Activated CD8-positive, alpha-beta T cell treated with anti-CD3 and anti-CD28 coated beads for 36 hours (primary cell): ENCODE measurements at regions of chr7 and their contacts with region 1.

Region 1: GRCh38 chr7:2709553-2710285 is 21.7 kb downstream of the AMZ1 start:
- DNase-seq: peak; percentile 88
- ATAC-seq: peak; percentile 90
- H3K4me3 Mint-ChIP-seq: peak overlapping the region; percentile 59
- H3K27ac Mint-ChIP-seq: peak overlapping the region; percentile 55
- H3K4me1 Mint-ChIP-seq: peaks cover 31% of the 10 kb centered on the region
- H3K27me3 Mint-ChIP-seq: peaks cover 14% of the 10 kb centered on the region
- CTCF ChIP-seq: peak; percentile 97

Region 2: GRCh38 chr7:2537981-2538851 is 171.5 kb before region 1 on chr7:
- CTCF ChIA-PET with region 1: no interaction called
- POLR2A ChIA-PET with region 1: no interaction called
- intact Hi-C with region 1: no loop called
- DNase-seq: no peak
- ATAC-seq: no peak
- H3K4me3 Mint-ChIP-seq: no peak overlapping the region
- H3K27ac Mint-ChIP-seq: no peak overlapping the region
- H3K4me1 Mint-ChIP-seq: no peaks in the 10 kb centered on the region
- H3K27me3 Mint-ChIP-seq: no peaks in the 10 kb centered on the region
- CTCF ChIP-seq: no peak

Region 3: GRCh38 chr7:2608921-2609411 is 100.8 kb before region 1 on chr7:
- CTCF ChIA-PET with region 1: interaction called, 10 read pairs
- POLR2A ChIA-PET with region 1: no interaction called
- intact Hi-C with region 1: no loop called
- DNase-seq: peak; percentile 56
- ATAC-seq: peak; percentile 79
- H3K4me3 Mint-ChIP-seq: no peak overlapping the region
- H3K27ac Mint-ChIP-seq: no peak overlapping the region
- H3K4me1 Mint-ChIP-seq: peaks cover 7% of the 10 kb centered on the region
- H3K27me3 Mint-ChIP-seq: no peaks in the 10 kb centered on the region
- CTCF ChIP-seq: peak; percentile 46

Region 4: DNA sequence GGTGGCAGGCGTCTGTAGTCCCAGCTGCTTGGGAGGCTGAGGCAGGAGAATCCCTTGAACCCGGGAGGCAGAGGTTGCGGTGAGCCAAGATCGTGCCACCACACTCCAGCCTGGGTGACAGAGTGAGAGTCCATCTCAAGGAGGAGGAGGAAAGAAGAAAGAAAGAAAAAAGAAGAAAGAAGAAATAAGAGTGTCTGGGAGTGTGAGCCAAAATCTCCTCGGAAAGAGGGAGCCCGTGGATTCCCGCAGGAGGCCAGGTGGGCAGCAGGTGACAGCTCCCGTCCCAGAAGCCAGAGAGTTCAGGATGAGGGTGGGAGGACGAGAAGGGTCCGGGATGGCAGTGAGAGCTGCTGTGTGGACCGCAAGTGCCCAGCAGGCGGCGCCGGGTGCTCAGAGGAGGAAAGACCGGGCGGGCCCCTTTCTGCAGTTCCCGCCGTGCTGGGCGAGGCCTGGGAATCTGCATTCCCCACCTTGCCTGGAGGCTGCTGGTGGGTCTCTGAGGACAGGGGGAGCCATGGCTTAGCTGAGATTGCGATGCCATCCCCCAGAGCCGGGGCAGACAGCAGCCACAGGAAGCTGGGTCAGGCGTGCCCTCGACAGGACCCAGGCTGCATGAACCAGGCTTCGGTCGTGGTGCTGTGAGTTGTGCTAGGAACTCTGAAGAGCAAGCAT is 38.9 kb before region 1 on chr7:
- CTCF ChIA-PET with region 1: interaction called, 249 read pairs
- POLR2A ChIA-PET with region 1: interaction called, 11 read pairs
- intact Hi-C with region 1: loop called (anchors 2 kb)
- DNase-seq: peak; percentile 82
- ATAC-seq: peak; percentile 95
- H3K4me3 Mint-ChIP-seq: no peak overlapping the region
- H3K27ac Mint-ChIP-seq: no peak overlapping the region
- H3K4me1 Mint-ChIP-seq: peaks cover 4% of the 10 kb centered on the region
- H3K27me3 Mint-ChIP-seq: peaks cover 11% of the 10 kb centered on the region
- CTCF ChIP-seq: peak; percentile 96

Region 5: DNA sequence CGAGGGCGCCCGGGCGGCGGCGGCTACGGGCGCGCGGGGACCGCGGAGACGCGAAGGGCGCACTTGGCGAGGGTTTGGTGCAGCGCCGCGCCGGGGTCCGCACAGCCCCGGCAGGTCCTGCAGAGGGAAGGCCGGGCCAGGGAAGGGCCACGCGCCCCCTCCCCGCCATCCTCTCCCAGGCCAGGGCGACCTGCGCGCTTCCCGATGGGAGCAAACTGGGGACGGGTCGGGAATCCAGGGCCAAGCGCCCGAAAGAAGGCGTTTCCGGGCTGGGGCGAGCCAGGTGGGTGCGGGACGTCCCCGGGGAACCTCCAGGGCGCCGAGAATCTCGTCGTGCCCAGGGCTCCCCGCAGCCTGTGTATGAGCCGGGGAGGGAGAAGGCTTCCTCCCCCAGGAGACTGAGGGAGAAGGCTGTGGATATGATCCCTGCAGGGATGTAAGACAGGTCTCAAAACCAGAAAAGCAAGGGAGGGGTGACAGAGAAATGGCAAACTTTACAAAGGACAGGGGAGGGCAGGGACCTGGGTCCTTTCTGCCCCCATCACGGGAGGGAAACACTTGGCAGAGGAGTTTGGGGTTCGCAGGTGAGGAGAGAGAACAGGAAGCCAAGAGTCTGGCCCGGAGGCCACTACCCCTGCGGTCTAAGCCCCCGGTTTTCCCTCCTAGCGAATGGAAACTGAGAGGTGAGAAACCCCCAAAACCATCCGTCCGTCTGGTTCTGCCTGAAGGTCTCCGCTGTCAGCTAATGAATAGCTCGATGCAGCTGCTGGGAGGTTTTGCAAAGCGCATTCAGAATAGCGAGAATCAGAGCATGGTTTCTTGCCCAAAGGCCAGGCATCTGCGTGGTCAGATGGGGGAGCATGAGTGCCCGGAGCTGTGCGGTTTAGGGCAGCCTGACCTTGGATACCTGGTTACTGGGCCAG is 21.0 kb before region 1 on chr7:
- CTCF ChIA-PET with region 1: interaction called, 35 read pairs
- POLR2A ChIA-PET with region 1: interaction called, 5 read pairs
- intact Hi-C with region 1: no loop called
- DNase-seq: peak; percentile 44
- ATAC-seq: peak; percentile 67
- H3K4me3 Mint-ChIP-seq: no peak overlapping the region
- H3K27ac Mint-ChIP-seq: no peak overlapping the region
- H3K4me1 Mint-ChIP-seq: peaks cover 11% of the 10 kb centered on the region
- H3K27me3 Mint-ChIP-seq: peaks cover 42% of the 10 kb centered on the region
- CTCF ChIP-seq: no peak

Region 6: DNA sequence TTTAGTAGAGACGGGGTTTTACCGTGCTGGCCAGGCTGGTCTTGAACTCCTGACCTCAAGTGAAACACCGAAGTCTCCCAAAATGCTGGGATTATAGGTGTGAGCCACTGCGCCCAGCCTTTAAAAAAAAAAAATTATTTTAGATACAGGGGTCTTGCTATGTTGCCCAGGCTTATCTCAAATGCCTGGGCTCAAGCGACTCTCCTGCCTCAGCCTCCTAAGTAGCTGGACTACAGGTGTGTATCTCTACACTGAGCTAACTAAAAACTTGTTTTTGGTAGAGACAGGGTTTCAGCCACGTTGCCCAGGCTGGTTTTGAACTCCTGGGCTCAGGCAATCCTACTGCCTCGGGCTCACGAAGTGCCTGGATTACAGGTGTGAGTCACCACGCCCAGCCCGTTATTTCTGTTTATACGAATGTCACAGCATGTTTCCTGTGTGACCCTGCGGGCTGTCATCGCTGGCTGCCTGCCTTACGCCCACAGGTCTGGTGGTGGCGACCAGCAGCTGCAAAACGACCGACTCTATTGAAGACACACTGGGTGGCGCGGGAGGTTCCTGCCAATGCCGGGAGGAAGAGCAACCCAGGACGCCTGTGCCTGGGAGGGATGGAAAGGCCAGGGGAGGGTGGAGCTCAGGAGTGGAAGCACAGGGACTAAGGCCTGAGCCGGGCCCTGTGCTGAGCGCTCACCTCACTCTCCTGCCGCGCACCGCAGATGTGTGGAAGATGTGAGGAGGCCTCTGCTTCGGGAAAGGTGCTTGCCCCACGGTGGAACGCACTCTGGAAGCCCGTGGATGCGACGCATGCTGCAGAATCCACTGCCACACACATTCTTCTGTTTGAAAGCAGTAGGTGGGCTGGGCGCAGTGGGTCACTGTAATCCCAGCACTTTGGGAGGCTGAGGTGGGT is 11.1 kb after region 1 on chr7:
- CTCF ChIA-PET with region 1: interaction called, 54 read pairs
- POLR2A ChIA-PET with region 1: interaction called, 9 read pairs
- intact Hi-C with region 1: no loop called
- DNase-seq: peak; percentile 98
- ATAC-seq: peak; percentile 78
- H3K4me3 Mint-ChIP-seq: peak overlapping the region; percentile 19
- H3K27ac Mint-ChIP-seq: peak overlapping the region; percentile 77
- H3K4me1 Mint-ChIP-seq: peaks cover 55% of the 10 kb centered on the region
- H3K27me3 Mint-ChIP-seq: peaks cover 11% of the 10 kb centered on the region
- CTCF ChIP-seq: no peak